IMR-90 (cell line): ENCODE measurements at regions of chr1 and their contacts with region 1.

Region 1: GRCh38 chr1:201888282-201889089 is at the start of gene SHISA4:
- DNase-seq: peak; percentile 29
- ATAC-seq: peak; percentile 88
- H3K4me3 ChIP-seq: peak within 1 kb of the TSS; percentile 94
- H3K27ac ChIP-seq: peak within 1 kb of the TSS; percentile 75
- H3K4me1 ChIP-seq: peaks cover 22% of the 10 kb centered on the region
- H3K27me3 ChIP-seq: no peaks in the 10 kb centered on the region
- CTCF ChIP-seq: no peak
- POLR2A ChIP-seq: no peak
- RAD21 ChIP-seq: no peak
- total RNA-seq, gene SHISA4: 10.0 and 11.1 TPM in 2 replicates

Region 2: GRCh38 chr1:202112839-202113672 is 224.6 kb after region 1 on chr1:
- CTCF ChIA-PET with region 1: no interaction called
- POLR2A ChIA-PET with region 1: no interaction called
- dilution Hi-C with region 1: no loop called
- in situ Hi-C with region 1: no loop called
- intact Hi-C with region 1: loop called (anchors 10 kb)
- DNase-seq: peak; percentile 11
- ATAC-seq: peak; percentile 73
- H3K4me3 ChIP-seq: no peak overlapping the region
- H3K27ac ChIP-seq: no peak overlapping the region
- H3K4me1 ChIP-seq: peaks cover 6% of the 10 kb centered on the region; the same call in 1 of the 2 replicates
- H3K27me3 ChIP-seq: 0 out of 2 replicates have a peak, but pooled peaks cover 2% of the 10 kb centered on the region
- CTCF ChIP-seq: no peak
- POLR2A ChIP-seq: no peak
- RAD21 ChIP-seq: no peak

Region 3: DNA sequence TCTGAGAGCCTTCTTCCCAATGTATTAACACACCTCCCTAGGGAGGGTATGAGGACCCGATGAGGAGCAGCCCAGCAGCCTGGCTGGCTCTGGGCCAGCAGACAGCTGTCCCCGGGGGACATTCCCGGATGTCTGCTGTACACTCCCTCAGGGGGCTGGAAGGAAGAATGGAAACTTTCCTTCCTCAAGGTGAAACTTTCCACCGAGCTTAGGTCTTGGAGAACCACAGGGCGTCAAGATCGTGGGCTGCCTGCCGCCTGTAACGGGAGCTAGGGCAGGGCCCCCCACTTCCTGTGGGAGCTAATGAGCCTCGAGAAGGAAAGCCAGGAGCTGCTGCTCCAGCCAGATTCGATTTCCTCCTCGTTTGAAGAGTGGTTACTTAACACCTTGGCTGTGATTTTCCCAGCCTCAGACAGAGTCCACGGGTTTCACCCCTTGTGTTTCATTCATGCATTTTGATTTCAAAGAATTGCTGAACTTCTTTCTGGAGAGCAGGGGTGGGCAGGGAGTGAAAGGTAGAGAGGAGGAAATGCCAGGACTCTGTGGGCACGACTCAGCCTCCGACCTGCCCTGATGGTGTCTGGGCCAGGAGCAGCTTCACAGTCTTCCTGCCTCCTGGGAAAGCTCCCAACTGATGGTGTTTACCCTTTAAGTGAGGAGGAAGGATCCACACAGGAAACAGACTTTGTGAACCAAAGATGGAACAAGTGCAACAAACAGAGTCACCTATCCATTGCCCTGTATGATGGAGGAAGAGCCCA is 423.6 kb after region 1 on chr1:
- CTCF ChIA-PET with region 1: no interaction called
- POLR2A ChIA-PET with region 1: no interaction called
- dilution Hi-C with region 1: no loop called
- in situ Hi-C with region 1: no loop called
- intact Hi-C with region 1: no loop called
- DNase-seq: no peak
- ATAC-seq: no peak
- H3K4me3 ChIP-seq: no peak overlapping the region
- H3K27ac ChIP-seq: no peak overlapping the region
- H3K4me1 ChIP-seq: no peaks in the 10 kb centered on the region
- H3K27me3 ChIP-seq: peaks cover 67% of the 10 kb centered on the region
- CTCF ChIP-seq: no peak
- POLR2A ChIP-seq: no peak
- RAD21 ChIP-seq: no peak